RWPE1 (cell line): ENCODE measurements at regions of chr11 and their contacts with region 1.

Region 1: DNA sequence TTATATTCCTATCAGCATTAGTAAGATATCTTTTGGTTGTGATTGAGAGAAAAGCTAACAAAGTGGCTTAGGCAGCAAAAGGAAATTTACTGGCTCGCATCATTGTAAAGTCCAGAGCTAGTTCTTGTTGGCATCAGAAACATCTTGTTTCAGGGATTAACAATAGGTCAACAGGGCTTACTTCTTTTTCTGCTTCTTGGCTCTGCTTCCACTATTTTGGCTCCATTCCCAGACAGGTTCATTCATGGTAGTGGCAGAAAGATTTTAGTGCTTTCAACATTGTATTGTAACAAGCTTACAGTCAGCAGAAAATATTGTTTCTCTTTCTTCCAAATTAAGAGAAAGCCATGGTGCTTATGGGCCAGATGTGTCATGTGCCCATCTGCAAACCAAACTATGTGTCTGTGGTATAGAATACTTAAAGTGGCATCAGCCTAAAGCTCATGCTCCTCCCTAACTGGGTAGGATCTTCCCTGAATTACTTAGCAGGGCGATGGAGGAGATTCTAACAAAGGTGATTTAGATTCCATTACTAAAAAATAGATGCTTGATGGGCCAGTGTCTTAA is 315.6 kb downstream of the RAB38 start:
- DNase-seq: no peak
- H3K27ac ChIP-seq: no peak overlapping the region
- CTCF ChIP-seq: no peak

Region 2: GRCh38 chr11:87934182-87934581 is 74.5 kb after region 1 on chr11:
- CTCF ChIA-PET with region 1: interaction called, 10 read pairs
- POLR2A ChIA-PET with region 1: no interaction called
- DNase-seq: no peak
- H3K27ac ChIP-seq: no peak overlapping the region
- CTCF ChIP-seq: no peak